ENCODE measurements at regions of chr7 and their contacts with region 1.

Region 1: DNA sequence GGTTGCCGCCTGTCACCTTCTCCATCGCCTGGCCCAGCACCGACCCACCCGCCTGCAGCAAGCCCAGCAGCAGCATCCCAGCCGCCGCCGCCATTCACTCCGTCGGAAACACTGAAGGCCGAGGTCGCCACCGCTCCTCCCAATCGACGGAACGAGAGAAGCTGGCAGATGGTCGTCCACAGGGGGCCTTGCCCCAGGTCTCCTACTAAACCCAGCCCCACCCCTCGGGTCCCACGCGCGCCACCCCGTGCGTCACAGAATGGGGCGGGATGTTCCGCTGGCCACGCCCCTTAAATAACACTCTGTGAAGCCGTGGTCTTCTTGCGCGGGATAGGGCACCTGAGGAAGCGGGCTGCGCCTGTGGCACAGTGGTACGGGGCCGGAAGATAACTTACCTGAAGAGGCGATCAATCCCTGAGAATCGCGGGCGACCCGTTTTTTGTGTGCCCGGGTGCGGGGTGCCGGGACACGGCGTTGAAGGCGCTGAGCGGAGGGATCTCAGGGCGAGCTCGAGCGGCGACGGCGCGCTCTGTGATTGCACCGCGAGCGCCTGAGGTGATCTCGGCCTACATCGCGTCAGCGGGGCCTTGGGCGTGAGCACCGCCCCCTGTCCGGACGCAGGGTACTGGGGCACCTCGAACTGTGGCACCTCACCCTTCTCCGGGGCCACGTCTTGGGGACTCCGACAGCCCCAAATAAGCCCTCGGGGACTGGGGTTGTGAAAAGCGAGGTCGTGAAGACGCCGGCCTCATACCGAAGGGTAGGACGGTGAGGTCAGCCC is at the start of gene CYP51A1:
- DNase-seq: peak; percentile 84 to 96 (median 91)
- ATAC-seq: peak; percentile 82
- H3K4me3 ChIP-seq: peak within 1 kb of the TSS; percentile 92
- H3K4me3 Mint-ChIP-seq: peak within 1 kb of the TSS; percentile 96
- H3K27ac ChIP-seq: peak within 1 kb of the TSS; percentile 84 to 94
- H3K27ac Mint-ChIP-seq: peak within 1 kb of the TSS; percentile 98
- H3K4me1 ChIP-seq: peaks cover 21% of the 10 kb centered on the region
- H3K4me1 Mint-ChIP-seq: peaks cover 40% of the 10 kb centered on the region
- H3K27me3 ChIP-seq: no peaks in the 10 kb centered on the region
- H3K27me3 Mint-ChIP-seq: no peaks in the 10 kb centered on the region
- CTCF ChIP-seq: no peak
- total RNA-seq, gene CYP51A1: 25.9 to 30.9 TPM

Region 2: DNA sequence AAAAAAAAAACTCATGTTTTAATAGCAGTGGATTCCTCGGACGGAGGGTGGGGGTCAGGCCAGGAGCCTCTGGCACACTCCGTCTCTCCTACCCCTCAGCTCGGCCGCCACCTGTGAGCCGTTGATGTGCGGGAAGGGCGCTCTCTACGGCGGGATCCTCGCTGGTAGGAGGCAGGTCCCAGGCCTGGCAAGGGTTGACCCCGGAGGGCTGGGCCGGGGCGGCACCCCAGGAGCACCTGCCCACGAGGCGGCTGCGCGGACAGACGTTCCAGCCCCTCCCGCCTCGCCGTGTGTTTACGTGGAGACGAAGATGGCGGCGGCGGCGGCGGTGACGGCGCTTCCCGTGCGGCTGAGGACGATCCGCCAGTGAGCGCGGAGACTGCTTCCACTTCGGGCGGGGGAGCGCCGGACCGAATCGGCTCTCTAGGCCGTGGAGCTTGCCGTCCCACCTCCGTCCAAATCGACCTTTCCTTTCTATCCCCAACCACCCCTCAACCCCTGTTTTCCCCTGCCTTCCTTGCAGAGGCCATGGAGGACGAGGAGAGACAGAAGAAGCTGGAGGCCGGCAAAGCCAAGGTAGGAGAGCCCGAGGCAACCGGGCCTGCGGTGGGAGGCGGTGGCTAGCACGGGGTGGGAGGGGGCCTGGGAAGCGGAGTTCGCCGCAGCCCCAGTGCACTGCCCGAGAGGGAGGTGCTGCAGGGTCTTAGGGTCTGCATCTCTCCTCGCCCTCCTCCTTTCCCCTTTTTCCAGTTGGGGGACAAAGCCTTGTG is 193.7 kb before region 1 on chr7 and contains the start of gene AKAP9:
- CTCF ChIA-PET with region 1: no interaction called
- POLR2A ChIA-PET with region 1: interaction called, 14 read pairs
- intact Hi-C with region 1: loop called in 1 of 2 experiments (anchors 2 kb)
- DNase-seq: peak; percentile 77 to 94 (median 84)
- ATAC-seq: peak; percentile 88
- H3K4me3 ChIP-seq: peak within 1 kb of the TSS; percentile 96
- H3K4me3 Mint-ChIP-seq: peak within 1 kb of the TSS; percentile 90
- H3K27ac ChIP-seq: peak within 1 kb of the TSS; percentile 82 to 93
- H3K27ac Mint-ChIP-seq: peak within 1 kb of the TSS; percentile 92
- H3K4me1 ChIP-seq: peaks cover 25% of the 10 kb centered on the region
- H3K4me1 Mint-ChIP-seq: peaks cover 49% of the 10 kb centered on the region
- H3K27me3 ChIP-seq: no peaks in the 10 kb centered on the region
- H3K27me3 Mint-ChIP-seq: no peaks in the 10 kb centered on the region
- CTCF ChIP-seq: no peak
- total RNA-seq, gene AKAP9: 62.5 to 64.8 TPM

Region 3: DNA sequence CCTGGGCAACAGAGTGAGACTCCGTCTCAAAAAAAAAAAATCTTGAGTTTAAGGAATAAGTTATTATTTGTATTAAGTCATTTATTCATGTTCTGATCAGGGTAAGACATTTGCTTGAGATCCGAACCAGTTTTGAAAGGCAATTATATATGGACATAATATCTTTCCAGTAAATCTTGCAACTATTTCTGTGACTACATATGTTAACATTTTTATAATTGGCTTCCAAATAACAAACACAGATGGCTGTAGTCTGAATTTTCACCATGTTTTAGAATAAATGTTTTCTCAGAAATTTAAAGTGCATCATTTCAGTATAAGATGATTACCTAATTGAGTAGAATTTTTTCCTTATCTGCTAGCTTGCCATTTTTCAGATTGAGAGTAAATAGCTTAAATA is 172.6 kb before region 1 on chr7:
- CTCF ChIA-PET with region 1: no interaction called
- POLR2A ChIA-PET with region 1: no interaction called
- intact Hi-C with region 1: no loop called
- DNase-seq: no peak
- ATAC-seq: no peak
- H3K4me3 ChIP-seq: no peak overlapping the region
- H3K4me3 Mint-ChIP-seq: no peak overlapping the region
- H3K27ac ChIP-seq: no peak overlapping the region
- H3K27ac Mint-ChIP-seq: no peak overlapping the region
- H3K4me1 ChIP-seq: peaks cover 3% of the 10 kb centered on the region
- H3K4me1 Mint-ChIP-seq: peaks cover 44% of the 10 kb centered on the region
- H3K27me3 ChIP-seq: no peaks in the 10 kb centered on the region
- H3K27me3 Mint-ChIP-seq: no peaks in the 10 kb centered on the region
- CTCF ChIP-seq: no peak

Region 4: DNA sequence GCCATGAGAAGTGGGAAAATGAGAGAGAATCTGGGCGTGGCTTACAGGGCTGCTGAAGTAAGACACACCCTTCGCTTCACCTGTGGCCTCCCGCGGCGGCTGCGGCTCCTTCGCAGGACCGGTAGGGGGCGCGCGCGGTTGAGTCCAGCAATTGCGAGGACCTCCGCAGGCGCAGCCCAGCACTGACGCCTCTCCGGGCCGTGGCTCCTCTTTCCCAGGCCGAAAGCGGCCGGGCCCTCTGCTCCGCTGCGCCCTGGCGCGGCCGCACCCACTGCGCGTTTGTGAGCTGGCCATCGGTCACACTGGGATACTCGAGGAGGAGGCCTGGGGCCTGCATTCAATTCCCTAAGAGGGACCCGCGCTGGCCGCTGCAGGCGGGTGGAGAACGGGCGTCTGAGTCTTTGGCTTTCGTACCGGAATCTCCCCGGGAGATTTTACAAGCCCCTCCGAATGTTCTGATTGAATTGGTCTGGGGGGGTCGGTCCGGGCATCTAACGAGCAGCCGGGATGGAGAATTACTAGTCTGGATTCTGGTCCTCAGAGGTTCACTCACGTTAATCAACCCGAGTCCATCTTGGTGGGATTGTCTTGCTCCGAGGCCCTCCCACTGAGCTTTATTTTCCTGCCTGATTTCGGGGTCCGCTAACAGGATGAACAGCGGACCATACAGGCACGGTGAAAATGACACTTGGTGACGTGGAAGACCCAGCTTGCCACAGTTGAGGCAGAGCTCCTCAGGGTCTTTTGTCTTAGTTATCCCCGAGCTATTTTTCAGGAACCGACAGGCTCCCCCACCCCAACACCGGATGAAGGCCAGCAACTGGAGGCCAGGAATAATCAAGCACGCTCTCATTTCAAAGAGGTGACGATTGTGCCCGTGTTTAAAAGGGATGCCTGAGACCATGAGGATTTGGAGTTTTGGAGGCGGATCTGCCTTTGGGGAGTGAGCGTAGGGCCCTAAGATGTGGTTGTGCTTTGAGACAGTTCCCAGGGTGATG is 44.8 kb after region 1 on chr7 and contains the start of gene LRRD1:
- CTCF ChIA-PET with region 1: no interaction called
- POLR2A ChIA-PET with region 1: interaction called, 4 read pairs
- intact Hi-C with region 1: loop called in 1 of 2 experiments (anchors 1 kb)
- DNase-seq: peak; percentile 78 to 93 (median 88)
- ATAC-seq: peak; percentile 99
- H3K4me3 ChIP-seq: peak within 1 kb of the TSS; percentile 58
- H3K4me3 Mint-ChIP-seq: peak within 1 kb of the TSS; percentile 84
- H3K27ac ChIP-seq: no peak within 1 kb of the TSS
- H3K27ac Mint-ChIP-seq: no peak within 1 kb of the TSS
- H3K4me1 ChIP-seq: peaks cover 11% of the 10 kb centered on the region
- H3K4me1 Mint-ChIP-seq: peaks cover 14% of the 10 kb centered on the region
- H3K27me3 ChIP-seq: peaks cover 0 to 2% of the 10 kb centered on the region in 2 experiments
- H3K27me3 Mint-ChIP-seq: peaks cover 7% of the 10 kb centered on the region
- CTCF ChIP-seq: peak; percentile 98
- total RNA-seq, gene LRRD1: not detected

Region 5: GRCh38 chr7:92245487-92246362 is 111.3 kb after region 1 on chr7 and contains the starts of genes ANKIB1 and KRIT1:
- CTCF ChIA-PET with region 1: interaction called, 6 read pairs
- POLR2A ChIA-PET with region 1: interaction called, 23 read pairs
- intact Hi-C with region 1: loop called (anchors 5 kb)
- DNase-seq: peak; percentile 76 to 93 (median 81)
- ATAC-seq: peak; percentile 78
- H3K4me3 ChIP-seq: peak within 1 kb of the TSS; percentile 87
- H3K4me3 Mint-ChIP-seq: peak within 1 kb of the TSS; percentile 97
- H3K27ac ChIP-seq: peak within 1 kb of the TSS; percentile 86 to 96
- H3K27ac Mint-ChIP-seq: peak within 1 kb of the TSS; percentile 99
- H3K4me1 ChIP-seq: peaks cover 17% of the 10 kb centered on the region
- H3K4me1 Mint-ChIP-seq: peaks cover 61% of the 10 kb centered on the region
- H3K27me3 ChIP-seq: no peaks in the 10 kb centered on the region
- H3K27me3 Mint-ChIP-seq: no peaks in the 10 kb centered on the region
- CTCF ChIP-seq: no peak
- total RNA-seq, gene ANKIB1: 60.0 to 66.9 TPM
- total RNA-seq, gene KRIT1: 28.6 to 28.7 TPM

Region 6: DNA sequence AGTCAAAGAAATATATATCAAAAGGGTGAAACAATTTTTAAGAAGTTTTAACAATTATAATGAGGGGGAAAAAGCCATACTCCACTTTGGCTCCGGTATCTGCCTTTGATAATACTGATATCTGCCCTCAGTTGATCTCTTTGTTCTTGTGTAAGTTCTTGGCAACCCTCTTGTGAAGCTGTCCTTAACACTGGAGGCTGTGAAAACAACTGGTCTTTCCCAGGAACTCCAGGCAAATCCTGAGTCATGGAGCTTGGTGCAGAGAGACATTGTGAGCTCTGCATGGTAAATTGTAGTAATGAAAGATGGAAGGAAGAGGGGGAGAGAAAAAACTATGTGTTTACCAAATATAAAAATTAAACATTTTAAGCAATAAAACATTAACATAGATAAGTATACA is 355.2 kb after region 1 on chr7:
- CTCF ChIA-PET with region 1: no interaction called
- POLR2A ChIA-PET with region 1: no interaction called
- intact Hi-C with region 1: no loop called
- DNase-seq: no peak
- ATAC-seq: no peak
- H3K4me3 ChIP-seq: no peak overlapping the region
- H3K4me3 Mint-ChIP-seq: no peak overlapping the region
- H3K27ac ChIP-seq: no peak overlapping the region
- H3K27ac Mint-ChIP-seq: no peak overlapping the region
- H3K4me1 ChIP-seq: no peaks in the 10 kb centered on the region
- H3K4me1 Mint-ChIP-seq: no peaks in the 10 kb centered on the region
- H3K27me3 ChIP-seq: no peaks in the 10 kb centered on the region
- H3K27me3 Mint-ChIP-seq: no peaks in the 10 kb centered on the region
- CTCF ChIP-seq: no peak

Region 7: DNA sequence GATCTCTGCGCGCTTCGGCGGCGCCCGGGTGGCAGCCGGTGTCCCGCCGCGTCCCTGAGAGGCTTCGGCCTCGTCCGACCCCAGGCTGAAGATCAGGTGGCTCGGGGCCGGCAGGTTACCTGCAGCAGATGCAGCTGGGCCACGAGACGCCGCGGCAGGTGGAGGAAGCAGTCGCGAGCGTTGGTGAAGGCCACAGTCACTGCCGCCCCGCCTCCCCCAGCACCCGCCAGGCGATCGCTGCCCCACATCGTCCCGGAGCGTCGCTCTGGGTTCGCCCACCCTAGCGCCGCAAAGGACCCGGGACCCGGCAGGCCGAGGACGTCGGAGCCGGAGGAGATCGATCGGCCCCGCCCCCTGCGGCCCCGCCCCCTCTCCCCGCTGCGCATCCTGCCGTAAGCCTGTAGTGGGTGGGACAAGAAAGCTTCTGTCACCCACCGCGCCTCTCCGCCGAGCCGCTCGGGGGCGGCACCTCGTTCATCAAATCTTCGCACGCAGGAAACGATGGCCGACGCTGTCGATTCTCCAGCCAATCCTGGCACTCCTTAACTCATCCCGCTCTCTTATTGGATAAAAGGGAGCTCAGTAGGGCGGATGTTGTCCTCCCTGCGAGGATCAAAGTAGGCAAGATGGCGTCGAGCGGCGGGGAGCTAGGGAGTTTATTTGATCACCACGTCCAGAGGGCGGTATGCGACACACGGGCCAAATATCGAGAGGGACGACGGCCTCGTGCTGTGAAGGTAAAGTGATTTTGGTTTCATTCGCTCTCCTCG is 393.9 kb after region 1 on chr7 and contains the starts of genes PEX1 and RBM48:
- CTCF ChIA-PET with region 1: interaction called, 3 read pairs
- POLR2A ChIA-PET with region 1: interaction called, 11 read pairs
- intact Hi-C with region 1: loop called in 1 of 2 experiments (anchors 1 kb)
- DNase-seq: peak; percentile 89 to 99 (median 94)
- ATAC-seq: peak; percentile 92
- H3K4me3 ChIP-seq: peak within 1 kb of the TSS; percentile 94
- H3K4me3 Mint-ChIP-seq: peak within 1 kb of the TSS; percentile 96
- H3K27ac ChIP-seq: peak within 1 kb of the TSS; percentile 86 to 97
- H3K27ac Mint-ChIP-seq: peak within 1 kb of the TSS; percentile 94
- H3K4me1 ChIP-seq: peaks cover 19% of the 10 kb centered on the region
- H3K4me1 Mint-ChIP-seq: peaks cover 52% of the 10 kb centered on the region
- H3K27me3 ChIP-seq: no peaks in the 10 kb centered on the region
- H3K27me3 Mint-ChIP-seq: no peaks in the 10 kb centered on the region
- CTCF ChIP-seq: peak; percentile 42
- total RNA-seq, gene PEX1: 19.7 to 20.7 TPM
- total RNA-seq, gene RBM48: 45.4 to 47.3 TPM

Region 8: GRCh38 chr7:92590711-92591310 is 456.4 kb after region 1 on chr7:
- CTCF ChIA-PET with region 1: no interaction called
- POLR2A ChIA-PET with region 1: no interaction called
- intact Hi-C with region 1: loop called in 1 of 2 experiments (anchors 5 kb)
- DNase-seq: peak in 3 of 14 experiments; percentile 6 to 24 (median 7)
- ATAC-seq: no peak
- H3K4me3 ChIP-seq: peak overlapping the region; percentile 85
- H3K4me3 Mint-ChIP-seq: peak overlapping the region; percentile 91
- H3K27ac ChIP-seq: no peak overlapping the region
- H3K27ac Mint-ChIP-seq: peak overlapping the region; percentile 95
- H3K4me1 ChIP-seq: peaks cover 30% of the 10 kb centered on the region
- H3K4me1 Mint-ChIP-seq: peaks cover 52% of the 10 kb centered on the region
- H3K27me3 ChIP-seq: no peaks in the 10 kb centered on the region
- H3K27me3 Mint-ChIP-seq: no peaks in the 10 kb centered on the region
- CTCF ChIP-seq: no peak

Region 9: DNA sequence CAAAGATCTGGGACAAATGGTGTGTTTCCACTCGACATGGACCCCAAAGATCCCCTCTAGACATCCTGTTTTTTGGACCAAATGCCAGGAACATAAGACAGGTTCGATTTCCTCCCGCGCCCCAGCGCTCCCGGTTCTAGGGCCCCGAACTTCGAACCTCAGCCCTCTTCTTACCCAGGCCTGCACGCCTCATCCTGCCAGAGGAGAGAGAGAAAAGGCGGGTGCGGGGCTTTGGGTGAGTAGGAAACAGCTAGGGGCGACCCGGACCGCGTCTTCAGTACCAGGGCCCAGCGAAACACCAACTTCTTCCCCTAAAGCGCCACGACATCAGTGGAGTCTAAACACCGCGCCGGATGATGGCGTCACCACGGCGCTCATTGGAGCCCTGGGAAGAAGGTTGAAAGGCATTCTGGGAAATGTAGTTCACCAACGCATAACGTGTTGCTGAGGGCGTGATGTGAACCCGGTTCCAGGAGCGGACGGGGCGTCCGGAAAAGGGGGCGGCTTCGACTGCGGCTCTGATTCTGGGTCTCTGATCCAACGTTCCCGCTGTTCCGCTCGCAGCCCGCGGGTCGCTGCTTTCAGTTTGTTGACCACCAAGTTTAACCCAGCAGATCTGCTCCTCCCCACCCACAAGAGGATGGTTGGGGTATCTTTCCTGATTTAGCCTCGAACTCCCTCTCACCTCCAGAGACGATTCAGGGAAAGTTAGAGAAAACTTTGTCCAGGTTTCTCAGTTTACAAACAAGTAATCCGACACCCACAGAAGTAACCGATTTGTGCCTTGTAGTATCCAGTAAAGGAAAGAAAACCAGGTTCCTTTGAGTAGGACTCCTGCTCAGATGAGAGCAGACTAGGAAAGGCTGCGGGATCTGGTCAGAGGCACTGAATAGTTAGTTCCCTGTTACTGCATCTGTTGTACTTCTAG is 1869.8 kb after region 1 on chr7 and contains the start of gene BET1:
- CTCF ChIA-PET with region 1: no interaction called
- POLR2A ChIA-PET with region 1: no interaction called
- intact Hi-C with region 1: loop called in 1 of 2 experiments (anchors 10 kb)
- DNase-seq: peak; percentile 84 to 98 (median 90)
- ATAC-seq: peak; percentile 95
- H3K4me3 ChIP-seq: peak within 1 kb of the TSS; percentile 75
- H3K4me3 Mint-ChIP-seq: peak within 1 kb of the TSS; percentile 99
- H3K27ac ChIP-seq: peak within 1 kb of the TSS; percentile 76 to 78
- H3K27ac Mint-ChIP-seq: peak within 1 kb of the TSS; percentile 99
- H3K4me1 ChIP-seq: peaks cover 14% of the 10 kb centered on the region
- H3K4me1 Mint-ChIP-seq: peaks cover 53% of the 10 kb centered on the region
- H3K27me3 ChIP-seq: no peaks in the 10 kb centered on the region
- H3K27me3 Mint-ChIP-seq: peaks cover 18% of the 10 kb centered on the region
- CTCF ChIP-seq: no peak
- total RNA-seq, gene BET1: 7.4 to 9.5 TPM

Measured in CD4-positive, alpha-beta T cell (primary cell).